Naive thymus-derived CD8-positive, alpha-beta T cell (primary cell): ENCODE measurements at regions of chr5 and their contacts with region 1.

Region 1: DNA sequence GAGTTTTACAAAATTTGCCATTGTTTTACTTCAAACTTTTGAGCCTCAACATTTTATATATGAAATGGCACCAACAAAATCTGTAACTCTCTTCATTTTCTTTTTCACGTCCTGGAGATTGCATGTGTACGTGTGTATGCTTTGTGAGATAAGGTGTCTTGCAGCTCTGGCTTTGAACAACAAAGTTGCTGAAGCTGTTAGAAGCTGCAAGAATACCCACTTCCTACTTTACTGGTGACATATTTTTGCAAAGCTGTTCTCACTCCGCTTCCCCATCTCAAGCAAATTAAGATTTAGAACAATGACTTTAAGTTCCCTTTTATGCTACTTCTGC is 41.8 kb downstream of the FYB1 start:
- DNase-seq: peak in 4 of 10 donors; percentile 66 to 85 (median 74)
- ATAC-seq: peak; percentile 62 to 74
- H3K4me3 Mint-ChIP-seq: peak overlapping the region; percentile 63 to 87 (median 75)
- H3K27ac Mint-ChIP-seq: peak overlapping the region; percentile 90 to 98 (median 95)
- H3K4me1 Mint-ChIP-seq: peaks cover 50 to 99% (median 97%) of the 10 kb centered on the region in 4 donors
- H3K27me3 Mint-ChIP-seq: no peaks in the 10 kb centered on the region

Region 2: DNA sequence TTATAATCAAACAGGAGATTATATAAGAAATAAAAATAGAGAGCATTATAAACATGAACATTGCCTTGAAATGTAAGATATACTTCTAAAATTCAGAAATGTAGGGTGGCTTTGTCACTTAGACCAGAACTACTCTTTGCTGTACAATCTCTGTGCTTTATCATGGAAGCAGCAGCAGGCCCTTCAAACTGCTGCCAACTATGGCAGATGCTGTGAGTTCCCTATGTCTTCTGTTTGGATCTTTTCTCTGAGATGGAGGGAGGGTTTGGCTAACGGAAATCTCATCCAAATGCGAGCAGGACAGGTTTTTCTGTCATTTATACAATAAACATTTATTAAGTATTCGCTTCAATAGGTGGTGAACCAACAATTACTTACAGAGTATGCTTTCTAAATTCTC is 68.6 kb before region 1 on chr5:
- POLR2A ChIA-PET with region 1: no interaction called
- DNase-seq: no peak
- ATAC-seq: no peak
- H3K4me3 Mint-ChIP-seq: no peak overlapping the region
- H3K27ac Mint-ChIP-seq: peak overlapping the region in 9 of 10 donors; percentile 2 to 85 (median 57)
- H3K4me1 Mint-ChIP-seq: peaks cover 0 to 9% (median 7%) of the 10 kb centered on the region in 4 donors
- H3K27me3 Mint-ChIP-seq: no peaks in the 10 kb centered on the region

Region 3: DNA sequence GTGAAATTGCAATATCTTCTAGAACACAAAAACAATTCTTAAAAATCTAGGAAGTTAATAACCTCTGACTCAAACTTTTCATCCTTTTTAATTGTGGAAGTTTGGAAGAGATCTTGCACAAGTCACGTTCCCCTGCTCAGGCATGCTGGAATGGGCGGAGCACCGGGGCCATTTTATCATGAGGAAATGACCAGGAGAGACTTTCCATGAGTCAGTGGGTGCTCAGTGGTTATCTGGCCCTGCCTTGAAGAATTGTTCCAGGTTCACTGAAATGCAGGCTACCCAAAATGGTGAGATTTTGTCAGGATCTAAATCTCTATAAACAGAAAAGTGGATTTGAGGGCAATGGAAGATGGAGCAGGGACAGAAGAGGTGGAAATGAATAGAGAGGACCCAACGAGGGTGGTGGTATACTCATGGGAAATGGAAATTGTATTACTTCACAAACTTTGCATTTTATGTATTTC is 19.4 kb before region 1 on chr5:
- POLR2A ChIA-PET with region 1: interaction called, 69 read pairs
- DNase-seq: no peak
- ATAC-seq: no peak
- H3K4me3 Mint-ChIP-seq: peak overlapping the region in 7 of 10 donors; percentile 1 to 76 (median 56)
- H3K27ac Mint-ChIP-seq: peak overlapping the region; percentile 48 to 95 (median 76)
- H3K4me1 Mint-ChIP-seq: peaks cover 47 to 91% (median 83%) of the 10 kb centered on the region in 4 donors
- H3K27me3 Mint-ChIP-seq: no peaks in the 10 kb centered on the region

Region 4: GRCh38 chr5:39164529-39165402 is 12.8 kb before region 1 on chr5:
- POLR2A ChIA-PET with region 1: interaction called, 69 read pairs
- DNase-seq: no peak
- ATAC-seq: peak; percentile 53 to 66
- H3K4me3 Mint-ChIP-seq: peak overlapping the region; percentile 48 to 81 (median 73)
- H3K27ac Mint-ChIP-seq: peak overlapping the region; percentile 85 to 95 (median 92)
- H3K4me1 Mint-ChIP-seq: peaks cover 46 to 92% (median 87%) of the 10 kb centered on the region in 4 donors
- H3K27me3 Mint-ChIP-seq: no peaks in the 10 kb centered on the region

Region 5: GRCh38 chr5:39194466-39195136 is 17.0 kb after region 1 on chr5:
- POLR2A ChIA-PET with region 1: interaction called, 446 read pairs
- DNase-seq: no peak
- ATAC-seq: no peak
- H3K4me3 Mint-ChIP-seq: peak overlapping the region; percentile 77 to 99 (median 89)
- H3K27ac Mint-ChIP-seq: peak overlapping the region; percentile 87 to 98 (median 96)
- H3K4me1 Mint-ChIP-seq: peaks cover 36 to 76% (median 70%) of the 10 kb centered on the region in 4 donors
- H3K27me3 Mint-ChIP-seq: no peaks in the 10 kb centered on the region

Region 6: GRCh38 chr5:39209924-39210323 is 32.3 kb after region 1 on chr5:
- POLR2A ChIA-PET with region 1: interaction called, 78 read pairs
- DNase-seq: peak; percentile 44 to 89 (median 78)
- ATAC-seq: peak; percentile 77 to 83
- H3K4me3 Mint-ChIP-seq: peak overlapping the region; percentile 70 to 87 (median 82)
- H3K27ac Mint-ChIP-seq: peak overlapping the region; percentile 93 to 100 (median 96)
- H3K4me1 Mint-ChIP-seq: peaks cover 51 to 100% (median 95%) of the 10 kb centered on the region in 4 donors
- H3K27me3 Mint-ChIP-seq: no peaks in the 10 kb centered on the region